ENCODE measurements at regions of chr13 and their contacts with region 1.

Region 1: DNA sequence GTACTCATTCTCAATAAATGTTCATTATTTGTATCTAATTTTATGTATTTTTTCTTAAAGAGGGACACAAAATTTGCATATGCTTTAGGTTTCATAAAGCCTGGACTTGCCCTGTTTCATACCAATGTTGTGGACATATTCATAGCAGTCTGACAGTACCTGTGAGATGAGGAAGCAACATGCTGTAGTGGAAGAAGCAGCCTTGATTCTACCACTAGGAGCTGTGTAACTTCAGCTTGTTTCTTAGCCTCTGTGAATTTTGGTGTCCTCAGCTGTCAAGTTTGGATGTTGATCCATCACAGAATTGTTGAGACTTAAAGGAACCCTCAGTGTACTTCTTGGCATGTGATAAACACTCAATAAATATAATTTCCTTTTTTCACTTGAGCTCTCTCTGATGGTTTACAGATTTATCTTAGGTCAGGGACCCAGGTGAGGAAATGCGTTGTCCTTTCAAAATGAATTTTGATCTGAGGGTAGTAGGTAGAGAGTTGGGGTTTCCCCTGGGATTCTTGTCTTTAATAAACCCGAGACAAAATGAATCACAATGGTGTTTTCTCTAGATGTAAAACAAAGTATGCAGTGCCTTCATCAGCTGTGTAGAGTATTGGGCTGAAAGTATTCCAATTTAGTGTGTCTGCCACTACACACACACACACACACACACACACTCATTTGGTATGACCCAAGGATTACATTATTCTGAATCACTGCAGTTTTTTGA is 152.1 kb downstream of the KCNRG start:
- DNase-seq: no peak
- H3K4me3 Mint-ChIP-seq: no peak overlapping the region
- H3K27ac Mint-ChIP-seq: no peak overlapping the region
- H3K4me1 Mint-ChIP-seq: peaks cover 15% of the 10 kb centered on the region
- H3K27me3 Mint-ChIP-seq: peaks cover 13% of the 10 kb centered on the region

Region 2: DNA sequence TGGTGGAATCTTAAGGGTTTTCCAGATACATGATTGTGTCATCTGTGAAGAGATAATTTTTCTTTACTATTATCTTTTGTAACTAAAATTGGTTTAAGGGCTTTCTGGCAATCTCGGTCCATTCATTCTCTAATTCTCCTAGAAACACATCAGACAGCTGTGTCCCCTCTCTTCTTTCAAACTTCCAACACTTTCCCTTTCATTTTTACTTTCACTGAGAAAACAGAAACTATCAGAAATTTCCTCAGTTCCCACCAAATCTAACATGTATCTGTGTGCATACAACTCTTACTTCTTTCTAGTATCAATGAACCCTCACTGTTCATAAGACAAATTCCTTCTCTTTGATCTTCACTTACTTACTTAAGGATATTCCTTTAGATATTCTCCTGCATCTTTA is 111.9 kb before region 1 on chr13:
- CTCF ChIA-PET with region 1: no interaction called
- POLR2A ChIA-PET with region 1: no interaction called
- intact Hi-C with region 1: no loop called
- DNase-seq: no peak
- H3K4me3 Mint-ChIP-seq: no peak overlapping the region
- H3K27ac Mint-ChIP-seq: no peak overlapping the region
- H3K4me1 Mint-ChIP-seq: peaks cover 14% of the 10 kb centered on the region
- H3K27me3 Mint-ChIP-seq: no peaks in the 10 kb centered on the region

Region 3: DNA sequence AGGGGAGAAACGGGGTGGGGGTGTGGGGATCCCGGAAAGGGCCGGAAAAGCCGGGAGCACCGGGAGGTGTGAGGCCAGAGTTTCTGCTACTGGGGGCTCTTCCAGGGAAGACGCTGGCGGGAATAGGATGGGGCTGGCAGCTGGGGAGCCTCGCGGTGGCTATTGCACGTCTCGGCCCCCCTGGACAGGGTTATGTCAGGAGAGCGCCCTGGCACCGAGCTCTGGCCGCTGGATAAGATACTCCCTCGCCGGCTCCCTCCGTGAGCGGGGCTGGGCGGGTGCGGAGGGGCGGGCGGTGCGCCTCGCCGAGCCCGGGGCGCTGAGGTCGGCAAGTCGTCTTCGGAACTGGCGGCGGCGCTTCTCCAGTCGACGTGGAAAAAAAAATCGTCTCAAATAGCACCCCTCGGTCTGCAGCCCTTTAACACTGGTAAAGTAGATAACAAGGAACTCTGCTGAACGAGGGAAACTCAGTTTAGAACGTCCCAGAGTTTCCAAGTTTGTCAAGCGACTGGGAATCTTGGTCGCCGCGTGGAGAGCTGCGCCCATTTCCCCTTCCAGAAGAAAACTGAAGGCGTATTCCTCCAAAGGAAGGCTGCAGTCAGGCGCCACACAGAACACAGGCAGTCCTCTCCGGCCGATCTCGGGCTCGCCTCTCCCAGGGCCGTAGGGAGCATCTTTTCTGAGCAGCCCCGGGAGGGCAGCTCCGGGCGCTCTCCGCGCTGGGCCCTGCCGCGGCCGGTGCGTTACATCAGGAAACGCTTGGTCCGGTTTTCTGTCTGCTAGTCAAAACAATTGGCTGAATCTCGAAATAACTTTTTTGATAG is 37.1 kb before region 1 on chr13:
- CTCF ChIA-PET with region 1: interaction called, 3 read pairs
- POLR2A ChIA-PET with region 1: no interaction called
- intact Hi-C with region 1: loop called (anchors 2 kb)
- DNase-seq: peak; percentile 42
- H3K4me3 Mint-ChIP-seq: peak overlapping the region; percentile 66
- H3K27ac Mint-ChIP-seq: peak overlapping the region; percentile 8
- H3K4me1 Mint-ChIP-seq: peaks cover 63% of the 10 kb centered on the region
- H3K27me3 Mint-ChIP-seq: peaks cover 64% of the 10 kb centered on the region

Region 4: GRCh38 chr13:50140581-50141374 is 26.6 kb before region 1 on chr13:
- CTCF ChIA-PET with region 1: no interaction called
- POLR2A ChIA-PET with region 1: no interaction called
- intact Hi-C with region 1: loop called (anchors 2 kb)
- DNase-seq: no peak
- H3K4me3 Mint-ChIP-seq: no peak overlapping the region
- H3K27ac Mint-ChIP-seq: no peak overlapping the region
- H3K4me1 Mint-ChIP-seq: peaks cover 8% of the 10 kb centered on the region
- H3K27me3 Mint-ChIP-seq: peaks cover 20% of the 10 kb centered on the region

Region 5: DNA sequence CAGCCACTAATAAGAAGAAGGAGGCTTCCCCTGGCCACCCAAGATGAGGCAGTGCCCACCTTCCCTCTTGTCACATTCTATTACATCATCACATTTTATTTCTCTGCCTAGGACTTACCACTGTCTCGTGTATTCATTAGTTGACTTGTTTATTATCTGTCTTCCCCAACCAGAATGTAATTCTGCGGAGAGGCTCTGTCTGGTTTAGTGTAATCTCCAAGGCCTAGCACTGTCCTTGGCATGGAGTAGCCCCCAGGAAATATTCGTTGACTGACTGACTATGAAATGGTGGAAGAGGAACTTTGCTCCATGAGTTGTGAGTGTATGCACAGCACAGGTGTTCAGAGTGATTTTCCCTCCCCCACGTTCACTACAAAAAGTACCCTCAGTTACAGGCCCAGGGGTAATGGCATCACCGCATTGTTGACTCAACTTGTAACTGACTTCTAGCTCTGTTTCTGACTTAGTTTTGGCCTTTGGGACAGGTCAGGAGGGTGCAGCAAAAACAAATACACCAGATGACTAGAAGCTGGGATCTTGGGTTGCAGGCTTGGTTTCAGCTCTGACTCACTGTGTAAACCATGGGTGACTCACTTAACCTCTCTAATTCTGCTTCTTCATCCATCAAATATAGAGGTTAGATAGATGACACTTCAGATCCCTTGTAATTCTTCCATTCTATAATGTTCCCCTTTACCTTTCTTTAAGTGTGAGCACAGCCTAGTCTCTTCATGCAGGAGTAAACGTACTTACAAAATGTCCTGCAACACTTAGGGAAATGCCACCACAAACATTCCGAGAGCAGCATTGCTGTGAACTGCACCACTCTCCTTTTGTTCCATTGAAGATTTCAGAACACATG is 77.6 kb after region 1 on chr13:
- CTCF ChIA-PET with region 1: interaction called, 5 read pairs
- POLR2A ChIA-PET with region 1: interaction called, 4 read pairs
- intact Hi-C with region 1: loop called (anchors 1 kb)
- DNase-seq: peak; percentile 85
- H3K4me3 Mint-ChIP-seq: no peak overlapping the region
- H3K27ac Mint-ChIP-seq: no peak overlapping the region
- H3K4me1 Mint-ChIP-seq: peaks cover 41% of the 10 kb centered on the region
- H3K27me3 Mint-ChIP-seq: peaks cover 29% of the 10 kb centered on the region

Region 6: DNA sequence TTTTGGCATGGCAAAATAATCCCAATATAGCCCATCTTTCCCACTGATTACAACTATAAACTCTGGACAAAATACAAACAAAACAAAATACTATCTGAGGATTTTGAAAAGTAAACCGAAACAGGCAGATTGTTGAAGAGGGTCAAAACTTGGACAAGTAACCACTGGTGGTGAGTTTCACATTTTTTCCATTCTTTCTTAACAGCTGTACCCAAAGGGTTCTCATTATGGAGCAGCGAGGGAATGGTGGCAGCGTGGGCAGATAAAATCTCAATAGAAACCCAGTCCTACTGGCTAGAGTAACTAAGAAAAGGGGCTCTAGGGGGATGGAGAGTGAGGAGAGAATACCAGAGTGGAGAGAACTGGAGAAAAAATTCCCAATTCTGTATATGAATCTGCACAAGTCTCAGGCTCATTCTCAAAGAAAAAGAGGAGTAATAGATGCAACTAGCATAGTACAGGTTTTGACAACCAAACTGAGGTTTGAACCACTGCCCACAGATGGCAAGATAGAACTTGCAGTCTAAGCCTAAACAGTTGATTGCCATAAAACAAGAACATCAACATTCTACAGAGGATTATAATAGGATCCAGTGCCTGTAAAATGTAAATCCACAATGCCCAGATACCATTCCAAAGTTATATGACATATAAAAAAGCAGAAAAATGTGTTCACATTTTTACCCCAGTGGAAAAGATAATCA is 132.3 kb after region 1 on chr13:
- CTCF ChIA-PET with region 1: no interaction called
- POLR2A ChIA-PET with region 1: no interaction called
- intact Hi-C with region 1: no loop called
- DNase-seq: no peak
- H3K4me3 Mint-ChIP-seq: no peak overlapping the region
- H3K27ac Mint-ChIP-seq: no peak overlapping the region
- H3K4me1 Mint-ChIP-seq: peaks cover 3% of the 10 kb centered on the region
- H3K27me3 Mint-ChIP-seq: no peaks in the 10 kb centered on the region